A673 (cell line): ENCODE measurements at regions of chr6 and their contacts with region 1.

Region 1: GRCh38 chr6:40569162-40569910 is 17.8 kb downstream of the LRFN2 start:
- DNase-seq: peak; percentile 58
- H3K4me3 ChIP-seq: no peak overlapping the region
- H3K27ac ChIP-seq: peak overlapping the region; percentile 99
- H3K4me1 ChIP-seq: peaks cover 73% of the 10 kb centered on the region
- H3K27me3 ChIP-seq: no peaks in the 10 kb centered on the region
- CTCF ChIP-seq: no peak

Region 2: GRCh38 chr6:40440053-40440452 is 129.3 kb before region 1 on chr6:
- CTCF ChIA-PET with region 1: no interaction called
- POLR2A ChIA-PET with region 1: no interaction called
- intact Hi-C with region 1: loop called (anchors 2 kb)
- DNase-seq: peak; percentile 68
- H3K4me3 ChIP-seq: no peak overlapping the region
- H3K27ac ChIP-seq: peak overlapping the region; percentile 86
- H3K4me1 ChIP-seq: peaks cover 88% of the 10 kb centered on the region
- H3K27me3 ChIP-seq: no peaks in the 10 kb centered on the region
- CTCF ChIP-seq: no peak

Region 3: DNA sequence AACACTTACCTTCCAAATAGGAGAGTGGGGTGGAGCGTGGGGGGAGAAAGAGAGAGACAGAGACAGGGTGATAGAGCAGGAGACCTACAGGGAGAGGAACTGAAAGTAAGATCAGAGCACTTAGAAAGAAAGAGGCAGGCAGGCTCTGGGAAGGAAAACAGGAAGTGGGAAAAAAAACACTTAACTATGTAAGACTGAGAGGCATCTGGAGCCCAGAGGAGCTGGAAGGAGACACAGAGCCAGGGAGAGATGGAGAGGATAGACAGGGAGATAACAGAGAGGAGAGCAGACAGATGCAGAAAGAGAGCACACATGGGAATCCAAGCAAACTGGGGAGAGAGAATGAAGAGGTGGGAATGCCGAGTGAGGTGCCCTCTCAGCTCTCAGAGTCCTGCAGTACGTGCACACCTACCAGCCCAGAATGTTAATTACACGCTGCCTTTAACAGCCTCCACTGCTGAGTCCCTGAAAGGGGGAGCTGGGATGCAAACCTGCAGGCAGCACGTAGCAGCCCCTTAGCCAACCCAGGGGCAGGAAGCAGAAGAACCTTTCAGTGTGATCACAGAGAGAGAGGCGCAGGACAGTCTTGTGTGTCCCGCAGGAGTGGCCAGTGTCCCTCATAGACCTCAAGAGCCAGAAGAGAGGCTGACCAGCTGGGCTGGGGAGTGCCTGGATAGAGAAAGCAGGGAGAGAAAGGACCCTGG is 150.5 kb after region 1 on chr6:
- CTCF ChIA-PET with region 1: no interaction called
- POLR2A ChIA-PET with region 1: no interaction called
- intact Hi-C with region 1: no loop called
- DNase-seq: peak; percentile 24
- H3K4me3 ChIP-seq: no peak overlapping the region
- H3K27ac ChIP-seq: no peak overlapping the region
- H3K4me1 ChIP-seq: peaks cover 4% of the 10 kb centered on the region
- H3K27me3 ChIP-seq: no peaks in the 10 kb centered on the region
- CTCF ChIP-seq: no peak

Region 4: GRCh38 chr6:40822619-40823018 is 253.3 kb after region 1 on chr6:
- CTCF ChIA-PET with region 1: no interaction called
- POLR2A ChIA-PET with region 1: no interaction called
- intact Hi-C with region 1: loop called (anchors 2 kb)
- DNase-seq: peak; percentile 86
- H3K4me3 ChIP-seq: no peak overlapping the region
- H3K27ac ChIP-seq: peak overlapping the region; percentile 68
- H3K4me1 ChIP-seq: peaks cover 41% of the 10 kb centered on the region
- H3K27me3 ChIP-seq: no peaks in the 10 kb centered on the region
- CTCF ChIP-seq: no peak